Activated CD8-positive, alpha-beta T cell treated with anti-CD3 and anti-CD28 coated beads for 36 hours (primary cell): ENCODE measurements at regions of chr11 and their contacts with region 1.

Region 1: GRCh38 chr11:118488480-118489109 is 38.7 kb upstream of the TTC36 start:
- DNase-seq: peak; percentile 76
- ATAC-seq: peak; percentile 75
- H3K4me3 Mint-ChIP-seq: no peak overlapping the region
- H3K27ac Mint-ChIP-seq: peak overlapping the region; percentile 10
- H3K4me1 Mint-ChIP-seq: peaks cover 7% of the 10 kb centered on the region
- H3K27me3 Mint-ChIP-seq: no peaks in the 10 kb centered on the region
- CTCF ChIP-seq: peak; percentile 88

Region 2: DNA sequence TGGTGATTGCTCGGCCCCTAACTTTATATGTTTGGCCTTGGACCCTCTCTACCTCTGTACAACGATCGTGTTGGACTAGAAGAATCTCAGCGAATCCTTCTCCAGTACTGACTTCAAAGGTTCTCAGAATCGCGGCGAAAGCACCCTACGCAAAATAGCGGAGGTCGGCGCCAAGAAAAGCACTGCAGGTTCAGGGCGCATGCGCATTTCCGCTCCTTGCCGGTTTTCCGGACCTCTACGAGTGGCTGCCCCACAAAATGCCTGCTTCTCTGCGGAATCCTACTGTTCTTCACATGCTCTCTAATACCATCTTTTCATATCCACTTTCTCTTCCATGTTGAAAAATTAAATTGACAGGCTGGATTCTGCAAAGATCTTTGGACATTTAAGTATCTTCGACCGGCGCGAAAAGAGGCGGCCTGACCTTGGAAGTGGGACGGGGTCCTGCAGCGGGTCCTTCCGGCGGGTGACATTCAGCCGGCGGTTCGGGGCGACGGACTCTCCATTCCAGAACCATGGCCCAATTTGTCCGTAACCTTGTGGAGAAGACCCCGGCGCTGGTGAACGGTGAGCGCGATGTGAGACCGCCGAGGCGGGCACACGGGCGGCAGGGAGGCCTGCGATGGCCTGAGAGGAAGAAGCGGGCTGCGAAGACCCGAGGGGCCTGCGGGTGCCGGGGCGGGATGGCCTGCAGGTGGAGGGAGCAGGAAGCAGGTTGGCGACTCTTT is 87.3 kb before region 1 on chr11 and contains the start of gene ATP5MG:
- CTCF ChIA-PET with region 1: interaction called, 25 read pairs
- POLR2A ChIA-PET with region 1: interaction called, 4 read pairs
- intact Hi-C with region 1: loop called (anchors 1 kb)
- DNase-seq: peak; percentile 96
- ATAC-seq: peak; percentile 70
- H3K4me3 Mint-ChIP-seq: peak within 1 kb of the TSS; percentile 86
- H3K27ac Mint-ChIP-seq: peak within 1 kb of the TSS; percentile 99
- H3K4me1 Mint-ChIP-seq: peaks cover 54% of the 10 kb centered on the region
- H3K27me3 Mint-ChIP-seq: no peaks in the 10 kb centered on the region
- CTCF ChIP-seq: no peak
- total RNA-seq, gene ATP5MG: 237 to 249 TPM

Region 3: DNA sequence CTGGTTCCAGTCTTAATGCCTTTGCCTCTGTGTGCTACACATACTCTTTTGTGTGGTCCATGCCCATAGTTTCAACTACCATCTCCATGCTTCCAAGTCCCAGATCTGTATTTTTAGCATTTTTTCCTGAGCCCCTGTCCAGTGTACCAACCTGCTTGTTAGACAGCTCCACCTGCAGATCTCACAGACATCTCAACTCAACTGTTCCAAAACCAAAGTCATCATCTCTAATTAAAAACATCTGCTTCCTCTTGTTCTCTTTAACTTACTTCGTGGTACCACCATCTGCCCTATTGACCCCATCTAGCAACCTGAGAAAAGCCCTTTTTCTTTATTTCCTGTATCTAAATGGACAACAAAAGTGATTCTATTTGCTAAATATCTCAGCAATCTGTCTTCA is 60.9 kb before region 1 on chr11:
- CTCF ChIA-PET with region 1: interaction called, 11 read pairs
- POLR2A ChIA-PET with region 1: no interaction called
- intact Hi-C with region 1: no loop called
- DNase-seq: no peak
- ATAC-seq: no peak
- H3K4me3 Mint-ChIP-seq: no peak overlapping the region
- H3K27ac Mint-ChIP-seq: no peak overlapping the region
- H3K4me1 Mint-ChIP-seq: peaks cover 3% of the 10 kb centered on the region
- H3K27me3 Mint-ChIP-seq: no peaks in the 10 kb centered on the region
- CTCF ChIP-seq: no peak

Region 4: GRCh38 chr11:119338318-119338907 is 849.8 kb after region 1 on chr11:
- CTCF ChIA-PET with region 1: no interaction called
- POLR2A ChIA-PET with region 1: no interaction called
- intact Hi-C with region 1: no loop called
- DNase-seq: peak; percentile 83
- ATAC-seq: peak; percentile 45
- H3K4me3 Mint-ChIP-seq: no peak overlapping the region
- H3K27ac Mint-ChIP-seq: no peak overlapping the region
- H3K4me1 Mint-ChIP-seq: peaks cover 49% of the 10 kb centered on the region
- H3K27me3 Mint-ChIP-seq: peaks cover 26% of the 10 kb centered on the region
- CTCF ChIP-seq: peak; percentile 75